Esophagus muscularis mucosa (tissue), 4 donors: ENCODE measurements at regions of chr20 and their contacts with region 1.

Region 1: GRCh38 chr20:3115190-3116107 is 30.9 kb upstream of the AVP start:
- DNase-seq: no peak
- H3K4me3 ChIP-seq: no peak overlapping the region
- H3K27ac ChIP-seq: no peak overlapping the region
- H3K4me1 ChIP-seq: peaks cover 6 to 27% (median 15%) of the 10 kb centered on the region in 4 donors
- H3K27me3 ChIP-seq: no peaks in the 10 kb centered on the region
- CTCF ChIP-seq: peak; percentile 56 to 81 (median 66)
- EP300 ChIP-seq: no peak
- POLR2A ChIP-seq: no peak

Region 2: DNA sequence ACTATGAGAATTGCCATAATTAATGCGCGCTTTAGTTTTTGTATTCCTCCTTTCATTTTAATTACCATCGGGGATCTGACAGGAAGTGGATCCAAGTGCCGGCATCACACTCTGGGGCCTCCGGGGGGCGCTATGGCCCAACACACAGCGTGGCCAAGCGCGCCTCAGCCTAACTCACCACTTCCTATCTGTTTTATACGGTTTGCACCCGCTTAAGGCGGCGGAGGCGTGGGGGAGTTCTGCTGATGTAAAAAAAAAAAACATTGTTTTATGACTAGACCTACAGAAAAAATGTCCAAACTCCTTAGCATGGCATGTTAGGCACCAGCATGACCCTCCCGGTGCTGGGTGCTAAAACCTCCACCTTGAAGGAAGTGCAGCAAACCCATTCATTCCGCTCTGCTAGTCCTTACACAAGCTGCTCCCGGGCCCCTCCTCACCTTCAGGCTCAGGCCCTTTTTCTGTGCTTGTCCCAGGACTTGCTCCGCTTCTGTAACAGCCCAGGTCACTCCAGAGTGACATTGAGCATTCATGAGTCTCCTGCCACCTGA is 427.3 kb before region 1 on chr20:
- intact Hi-C with region 1: no loop called
- DNase-seq: no peak
- H3K4me3 ChIP-seq: no peak overlapping the region
- H3K27ac ChIP-seq: no peak overlapping the region
- H3K4me1 ChIP-seq: peaks cover 0 to 15% (median 15%) of the 10 kb centered on the region in 4 donors
- H3K27me3 ChIP-seq: peaks cover 0 to 8% (median 0%) of the 10 kb centered on the region in 4 donors
- CTCF ChIP-seq: peak; percentile 31 to 56 (median 39)
- EP300 ChIP-seq: no peak
- POLR2A ChIP-seq: no peak

Region 3: DNA sequence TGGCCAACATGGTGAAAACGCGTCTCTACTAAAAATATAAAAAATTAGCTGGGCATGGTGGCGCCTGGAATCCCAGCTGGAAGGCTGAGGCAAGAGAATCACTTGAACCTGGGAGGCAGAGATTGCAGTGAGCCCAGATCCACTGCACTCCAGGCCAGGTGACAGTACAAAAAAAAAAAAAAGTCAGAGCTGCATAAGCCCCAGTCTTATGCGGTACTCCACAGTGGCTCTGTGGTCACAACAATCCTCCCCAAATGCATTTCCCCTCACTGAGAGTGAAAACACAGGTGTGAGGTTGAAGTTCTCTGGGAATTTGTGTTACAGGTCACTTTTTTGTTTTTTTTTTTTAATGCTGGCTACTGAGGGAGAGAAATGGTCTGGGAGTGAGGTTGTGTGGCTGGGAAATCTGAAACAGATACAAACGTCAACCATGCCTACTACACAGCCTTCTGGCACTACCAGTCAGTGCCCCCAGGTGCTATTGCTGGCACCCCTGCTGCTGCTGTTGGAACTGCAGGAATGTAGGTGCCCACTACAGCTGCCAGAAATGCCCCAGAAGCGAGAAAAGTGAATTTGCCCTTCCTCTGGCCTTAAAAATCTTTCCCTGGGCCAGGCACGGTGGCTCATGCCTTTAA is 63.9 kb before region 1 on chr20:
- intact Hi-C with region 1: loop called (anchors 1 kb)
- DNase-seq: no peak
- H3K4me3 ChIP-seq: no peak overlapping the region
- H3K27ac ChIP-seq: no peak overlapping the region
- H3K4me1 ChIP-seq: peaks cover 12 to 17% (median 14%) of the 10 kb centered on the region in 4 donors
- H3K27me3 ChIP-seq: no peaks in the 10 kb centered on the region
- CTCF ChIP-seq: peak in 1 of 3 experiments; percentile 3
- EP300 ChIP-seq: no peak
- POLR2A ChIP-seq: no peak